B cell (primary cell): ENCODE measurements at regions of chr10 and their contacts with region 1.

Region 1: GRCh38 chr10:49177391-49178355 is 10.5 kb downstream of the TMEM273 start:
- DNase-seq: peak; percentile 55
- ATAC-seq: peak; percentile 72
- H3K4me3 ChIP-seq: no peak overlapping the region
- H3K4me3 Mint-ChIP-seq: peak overlapping the region; percentile 62
- H3K27ac ChIP-seq: peak overlapping the region; percentile 34 to 72
- H3K27ac Mint-ChIP-seq: peak overlapping the region; percentile 88
- H3K4me1 ChIP-seq: peaks cover 57 to 78% of the 10 kb centered on the region in 2 donors
- H3K4me1 Mint-ChIP-seq: peaks cover 88% of the 10 kb centered on the region
- H3K27me3 ChIP-seq: no peaks in the 10 kb centered on the region
- H3K27me3 Mint-ChIP-seq: no peaks in the 10 kb centered on the region
- CTCF ChIP-seq: no peak

Region 2: DNA sequence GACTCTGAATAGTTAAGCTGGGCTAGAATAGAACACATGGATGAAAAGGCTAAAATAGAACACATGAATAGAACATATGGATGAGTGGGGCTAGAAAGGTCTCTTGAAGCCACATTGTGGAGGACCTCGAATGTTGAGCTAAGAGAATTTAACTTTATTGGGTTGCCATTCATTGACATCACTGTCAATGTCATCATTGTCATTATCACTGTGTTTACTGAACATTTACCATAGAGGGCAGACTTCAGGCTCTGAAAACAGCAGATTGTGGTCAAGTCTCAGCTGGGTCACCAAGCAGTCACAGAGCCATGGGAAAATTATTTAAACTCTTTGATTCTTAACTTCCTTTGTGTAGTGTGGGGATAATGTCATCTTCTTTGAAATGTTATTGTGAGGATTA is 412.6 kb before region 1 on chr10:
- CTCF ChIA-PET with region 1: no interaction called
- POLR2A ChIA-PET with region 1: no interaction called
- intact Hi-C with region 1: no loop called
- DNase-seq: no peak
- ATAC-seq: no peak
- H3K4me3 ChIP-seq: no peak overlapping the region
- H3K4me3 Mint-ChIP-seq: no peak overlapping the region
- H3K27ac ChIP-seq: no peak overlapping the region
- H3K27ac Mint-ChIP-seq: peak overlapping the region; percentile 26
- H3K4me1 ChIP-seq: no peaks in the 10 kb centered on the region
- H3K4me1 Mint-ChIP-seq: peaks cover 12% of the 10 kb centered on the region
- H3K27me3 ChIP-seq: no peaks in the 10 kb centered on the region
- H3K27me3 Mint-ChIP-seq: no peaks in the 10 kb centered on the region
- CTCF ChIP-seq: no peak

Region 3: GRCh38 chr10:49164559-49165188 is 13.0 kb before region 1 on chr10:
- CTCF ChIA-PET with region 1: interaction called, 8 read pairs
- POLR2A ChIA-PET with region 1: no interaction called
- intact Hi-C with region 1: loop called (anchors 1 kb)
- DNase-seq: peak; percentile 58
- ATAC-seq: peak; percentile 81
- H3K4me3 ChIP-seq: no peak overlapping the region
- H3K4me3 Mint-ChIP-seq: no peak overlapping the region
- H3K27ac ChIP-seq: no peak overlapping the region
- H3K27ac Mint-ChIP-seq: no peak overlapping the region
- H3K4me1 ChIP-seq: peaks cover 0 to 6% of the 10 kb centered on the region in 2 donors
- H3K4me1 Mint-ChIP-seq: peaks cover 12% of the 10 kb centered on the region
- H3K27me3 ChIP-seq: no peaks in the 10 kb centered on the region
- H3K27me3 Mint-ChIP-seq: no peaks in the 10 kb centered on the region
- CTCF ChIP-seq: peak; percentile 53

Region 4: DNA sequence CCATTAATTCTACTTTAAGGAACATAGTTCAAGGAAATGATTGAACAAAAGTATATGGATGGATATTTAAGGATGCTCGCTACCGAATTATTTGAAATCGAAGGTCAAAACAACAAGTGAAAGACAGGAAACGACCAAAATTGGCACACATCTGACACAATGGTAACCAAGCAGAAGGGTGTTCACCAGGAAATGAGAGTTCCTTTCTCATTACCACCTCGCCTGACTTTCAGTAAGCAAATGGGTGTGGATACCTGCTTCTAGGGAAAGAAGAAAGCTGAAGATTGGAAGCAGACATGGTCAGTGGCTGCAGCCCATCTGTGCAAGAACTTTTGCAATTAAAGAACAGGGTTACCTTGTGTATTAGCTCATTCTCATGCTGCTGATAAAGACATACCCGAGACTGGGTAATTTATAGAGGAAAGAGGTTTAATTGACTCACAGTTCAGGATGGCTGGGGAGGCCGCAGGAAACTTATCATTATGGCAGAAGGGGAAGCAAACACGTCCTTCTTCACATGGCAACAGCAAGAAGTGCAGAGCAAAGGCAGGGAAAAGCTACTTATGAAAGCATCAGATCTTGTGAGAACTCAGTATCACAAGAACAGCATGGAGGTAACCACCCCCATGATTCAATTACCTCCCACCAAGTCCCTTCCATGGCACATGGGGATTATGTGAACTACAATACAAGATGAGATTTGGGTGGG is 16.7 kb after region 1 on chr10:
- CTCF ChIA-PET with region 1: interaction called, 3 read pairs
- POLR2A ChIA-PET with region 1: no interaction called
- intact Hi-C with region 1: loop called (anchors 2 kb)
- DNase-seq: no peak
- ATAC-seq: no peak
- H3K4me3 ChIP-seq: peak overlapping the region in 1 of 5 experiments; percentile 26
- H3K4me3 Mint-ChIP-seq: peak overlapping the region; percentile 60
- H3K27ac ChIP-seq: peak overlapping the region in 1 of 2 donors; percentile 68
- H3K27ac Mint-ChIP-seq: peak overlapping the region; percentile 91
- H3K4me1 ChIP-seq: peaks cover 29 to 34% of the 10 kb centered on the region in 2 donors
- H3K4me1 Mint-ChIP-seq: peaks cover 39% of the 10 kb centered on the region
- H3K27me3 ChIP-seq: peaks cover 0 to 5% (median 2%) of the 10 kb centered on the region in 4 experiments
- H3K27me3 Mint-ChIP-seq: peaks cover 8% of the 10 kb centered on the region
- CTCF ChIP-seq: no peak

Region 5: GRCh38 chr10:49207113-49207512 is 29.4 kb after region 1 on chr10:
- CTCF ChIA-PET with region 1: no interaction called
- POLR2A ChIA-PET with region 1: no interaction called
- intact Hi-C with region 1: no loop called
- DNase-seq: no peak
- ATAC-seq: no peak
- H3K4me3 ChIP-seq: no peak overlapping the region
- H3K4me3 Mint-ChIP-seq: no peak overlapping the region
- H3K27ac ChIP-seq: no peak overlapping the region
- H3K27ac Mint-ChIP-seq: no peak overlapping the region
- H3K4me1 ChIP-seq: no peaks in the 10 kb centered on the region
- H3K4me1 Mint-ChIP-seq: peaks cover 3% of the 10 kb centered on the region
- H3K27me3 ChIP-seq: peaks cover 0 to 5% (median 2%) of the 10 kb centered on the region in 4 experiments
- H3K27me3 Mint-ChIP-seq: peaks cover 10% of the 10 kb centered on the region
- CTCF ChIP-seq: no peak